ENCODE measurements at regions of chr4 and their contacts with region 1.

Region 1: DNA sequence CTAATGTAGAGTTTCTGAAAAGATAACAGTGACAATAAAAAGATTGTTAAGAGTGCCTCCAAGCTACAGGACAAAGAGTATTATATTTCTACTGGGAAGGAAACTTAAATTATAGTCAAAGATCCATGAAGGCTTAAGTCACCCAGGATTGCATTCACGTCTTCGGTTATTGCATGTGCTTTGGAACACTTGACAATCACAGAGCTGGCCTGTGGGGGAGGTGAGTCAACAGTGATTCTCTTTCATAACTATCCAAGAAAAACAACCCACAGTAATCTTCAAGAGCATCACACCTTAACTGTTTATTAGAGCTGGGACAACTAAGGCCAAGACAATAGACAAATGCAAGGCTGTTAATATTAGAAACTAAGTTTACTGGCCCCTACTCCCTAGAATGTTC is 40.3 kb downstream of the PDGFC start:
- DNase-seq: peak; percentile 82
- ATAC-seq: peak; percentile 56
- H3K4me3 ChIP-seq: no peak overlapping the region; the same call in 1 of the 2 replicates
- H3K27ac ChIP-seq: peak overlapping the region; percentile 83
- H3K4me1 ChIP-seq: peaks cover 35% of the 10 kb centered on the region
- H3K27me3 ChIP-seq: no peaks in the 10 kb centered on the region
- CTCF ChIP-seq: no peak

Region 2: GRCh38 chr4:156941940-156942548 is 10.8 kb after region 1 on chr4:
- CTCF ChIA-PET with region 1: no interaction called
- POLR2A ChIA-PET with region 1: interaction called, 3 read pairs
- intact Hi-C with region 1: loop called (anchors 1 kb)
- DNase-seq: peak; percentile 90
- ATAC-seq: peak; percentile 85
- H3K4me3 ChIP-seq: peak overlapping the region; percentile 58
- H3K27ac ChIP-seq: peak overlapping the region; percentile 70
- H3K4me1 ChIP-seq: peaks cover 59% of the 10 kb centered on the region
- H3K27me3 ChIP-seq: no peaks in the 10 kb centered on the region
- CTCF ChIP-seq: no peak

Region 3: GRCh38 chr4:156999175-156999516 is 67.9 kb after region 1 on chr4:
- CTCF ChIA-PET with region 1: no interaction called
- POLR2A ChIA-PET with region 1: no interaction called
- intact Hi-C with region 1: loop called (anchors 1 kb)
- DNase-seq: peak; percentile 98
- ATAC-seq: peak; percentile 83
- H3K4me3 ChIP-seq: peak overlapping the region; percentile 43; the same call in 1 of the 2 replicates
- H3K27ac ChIP-seq: peak overlapping the region; percentile 79
- H3K4me1 ChIP-seq: peaks cover 31% of the 10 kb centered on the region
- H3K27me3 ChIP-seq: no peaks in the 10 kb centered on the region
- CTCF ChIP-seq: no peak

Region 4: DNA sequence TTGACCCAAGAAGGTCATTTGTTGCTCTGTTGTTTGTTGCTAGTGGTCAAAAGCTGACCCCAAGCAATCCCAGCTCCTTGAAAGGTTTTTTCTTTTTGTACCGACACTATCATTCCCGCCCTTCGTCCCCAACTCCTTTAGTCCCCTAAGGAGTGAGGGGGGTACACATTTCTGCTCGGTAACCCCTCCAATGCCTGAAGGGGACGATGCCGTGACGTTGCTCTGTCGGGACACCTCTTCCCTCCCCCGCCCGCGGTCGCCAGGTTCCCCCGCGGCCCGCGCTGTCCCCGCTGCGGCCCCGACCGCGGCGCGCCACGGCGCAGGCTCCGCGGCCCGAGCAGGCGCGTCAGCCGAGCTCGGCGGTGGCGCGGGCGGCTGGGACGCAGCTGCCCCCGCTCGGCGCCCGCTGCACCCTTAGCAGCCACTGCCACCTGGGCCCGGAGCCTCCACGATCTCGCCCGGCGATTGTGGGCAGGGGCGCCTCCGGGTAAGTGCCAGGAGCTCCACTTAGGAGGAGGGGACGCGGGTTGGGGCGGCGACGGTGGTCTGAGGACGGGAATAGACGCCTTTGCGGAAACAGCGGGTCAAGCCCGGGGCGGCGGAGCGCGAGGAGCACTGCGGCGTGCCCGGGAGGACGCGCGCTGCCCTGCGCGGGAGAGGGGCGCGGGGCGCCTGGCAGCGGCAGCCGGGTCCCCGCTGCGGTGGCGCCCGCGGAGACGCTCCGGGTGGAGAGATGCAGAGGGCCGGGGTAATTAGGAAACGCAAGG is 144.7 kb after region 1 on chr4 and contains the start of gene GLRB:
- CTCF ChIA-PET with region 1: no interaction called
- POLR2A ChIA-PET with region 1: no interaction called
- intact Hi-C with region 1: no loop called
- DNase-seq: peak; percentile 38
- ATAC-seq: peak; percentile 90
- H3K4me3 ChIP-seq: peak within 1 kb of the TSS; percentile 92
- H3K27ac ChIP-seq: no peak within 1 kb of the TSS
- H3K4me1 ChIP-seq: peaks cover 15% of the 10 kb centered on the region; the same call in 1 of the 2 replicates
- H3K27me3 ChIP-seq: no peaks in the 10 kb centered on the region
- CTCF ChIP-seq: no peak
- total RNA-seq, gene GLRB: 2.8 and 4.1 TPM in 2 replicates